Posterior vena cava (tissue), 2 donors: ENCODE measurements at regions of chr3 and their contacts with region 1.

Region 1: DNA sequence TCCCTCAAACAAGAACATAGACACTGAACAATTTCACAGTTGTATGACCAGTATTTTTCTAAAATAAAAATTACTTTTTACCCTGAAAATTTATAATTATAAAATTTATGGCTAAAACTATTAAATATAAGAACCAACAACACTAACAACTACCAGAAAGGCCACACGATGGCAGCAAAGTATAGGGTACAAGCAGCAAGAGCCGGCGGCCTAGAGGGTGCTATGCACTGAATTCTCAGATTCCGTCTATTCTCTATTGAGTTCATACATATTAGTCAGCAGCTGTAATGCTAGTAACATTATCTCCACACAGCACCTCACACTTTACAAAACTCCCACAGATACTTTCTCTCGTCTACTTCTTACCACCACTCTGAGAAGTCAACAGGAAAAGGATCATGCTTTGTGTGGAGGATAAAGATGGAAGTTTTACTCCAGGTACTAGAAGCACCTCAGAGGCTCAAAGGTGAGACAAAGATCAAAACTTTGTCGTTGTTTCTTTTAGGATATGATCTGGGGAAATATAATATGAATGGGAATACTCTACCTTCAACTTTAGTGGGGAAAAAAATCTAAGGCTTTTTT is 160.5 kb downstream of the FGF12 start:
- DNase-seq: no peak

Region 2: DNA sequence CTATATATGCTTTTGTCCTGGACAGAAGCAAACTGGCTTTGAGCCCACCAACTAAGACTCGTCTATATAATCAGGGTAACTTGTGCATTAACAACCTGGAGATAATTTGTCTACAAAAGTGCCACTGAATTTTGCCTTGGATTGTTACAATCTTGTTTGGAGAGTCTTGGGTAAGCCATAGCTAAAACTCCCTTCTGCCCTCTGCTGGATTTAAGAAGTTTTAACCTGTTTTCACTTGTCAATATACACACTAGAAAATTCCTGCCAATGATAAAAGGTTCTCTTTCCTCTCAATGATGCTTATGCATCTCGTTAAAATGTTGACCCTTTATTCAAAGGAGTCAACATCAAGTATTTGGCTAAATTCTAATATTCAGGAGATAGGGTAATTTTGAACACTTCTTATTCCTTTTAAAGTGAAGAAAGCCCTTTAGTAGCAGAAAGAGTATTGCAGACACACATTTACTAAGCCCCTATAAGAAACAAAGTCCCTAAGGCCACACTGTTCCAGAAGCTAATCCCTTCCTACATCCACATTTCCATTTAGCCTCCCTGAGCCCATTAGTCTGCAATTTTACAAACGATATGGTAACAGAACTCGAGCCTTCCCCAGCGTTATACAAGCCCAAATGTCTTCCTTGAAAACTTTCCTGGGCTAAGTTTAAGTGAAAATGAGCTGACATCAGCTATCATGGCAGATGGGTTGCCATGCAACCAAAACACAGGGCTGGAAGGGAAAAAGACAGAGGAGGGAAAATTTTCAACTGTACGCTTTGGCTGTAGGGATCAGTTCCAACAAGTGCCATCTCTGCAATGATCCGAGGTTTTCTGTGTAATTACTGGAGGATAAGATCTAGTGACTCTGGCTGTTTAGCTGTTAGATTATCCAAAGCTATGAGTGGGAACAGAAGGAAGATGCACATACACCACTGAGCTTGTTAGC is 236.4 kb after region 1 on chr3:
- intact Hi-C with region 1: loop called (anchors 5 kb)
- DNase-seq: no peak